ENCODE measurements at regions of chr12 and their contacts with region 1.

Region 1: GRCh38 chr12:122097927-122098756 is 19.6 kb downstream of the MLXIP start:
- DNase-seq: no peak

Region 2: GRCh38 chr12:121697098-121697698 is 400.9 kb before region 1 on chr12:
- intact Hi-C with region 1: no loop called
- DNase-seq: no peak

Region 3: GRCh38 chr12:122078141-122079032 is 19.8 kb before region 1 on chr12 and contains the start of gene MLXIP:
- intact Hi-C with region 1: loop called (anchors 2 kb)
- DNase-seq: peak; percentile 97
- total RNA-seq, gene MLXIP: 24.7 TPM

Measured in cardiac septum (tissue), 1 donor.